ENCODE measurements at regions of chr11 and their contacts with region 1.

Region 1: DNA sequence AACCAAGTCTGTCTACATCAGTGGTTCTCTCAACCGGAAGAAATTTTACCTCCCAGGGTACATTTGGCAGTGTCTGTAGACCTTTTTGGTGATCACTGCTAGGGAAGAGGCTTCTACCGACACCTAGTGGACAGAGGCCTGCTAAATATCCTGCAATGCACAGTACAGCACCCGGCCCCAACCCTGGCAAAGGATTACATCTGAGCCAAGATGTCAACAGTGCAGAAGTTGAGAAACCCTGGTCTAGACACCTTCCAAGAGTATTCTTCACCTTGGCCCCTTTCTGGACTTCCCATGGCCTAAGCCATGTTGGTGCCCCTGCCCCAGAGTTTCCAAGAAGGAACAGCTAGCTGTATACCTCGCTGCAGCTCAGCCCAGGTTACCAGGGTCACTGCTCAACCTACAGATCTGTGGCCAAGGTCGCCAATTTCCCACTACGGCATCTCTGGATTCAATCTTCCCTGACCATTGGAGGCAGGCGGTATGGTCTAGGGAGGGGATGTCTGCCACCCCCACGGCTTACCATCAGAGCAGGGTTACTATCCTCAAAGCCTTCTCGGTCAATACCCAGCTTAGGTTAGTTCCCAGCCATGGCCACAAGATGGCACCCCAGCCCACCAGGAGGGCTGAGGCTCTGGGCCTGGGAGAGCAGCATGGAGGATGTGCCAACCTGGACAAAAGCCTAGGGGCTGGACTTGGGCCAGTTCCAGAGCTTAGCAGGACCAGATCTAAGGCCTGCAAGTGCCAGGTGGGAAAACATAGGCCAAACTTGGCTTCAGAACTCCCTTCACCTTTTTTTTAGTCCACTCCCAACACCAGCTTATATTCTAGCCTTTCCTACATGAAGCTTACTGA is 3.7 kb upstream of the KCNC1 start:
- DNase-seq: peak; percentile 91
- H3K27ac ChIP-seq: no peak overlapping the region
- CTCF ChIP-seq: peak; percentile 86

Region 2: GRCh38 chr11:17598700-17599459 is 132.0 kb before region 1 on chr11:
- CTCF ChIA-PET with region 1: interaction called, 12 read pairs
- POLR2A ChIA-PET with region 1: no interaction called
- DNase-seq: peak; percentile 65
- H3K27ac ChIP-seq: no peak overlapping the region
- CTCF ChIP-seq: peak; percentile 93

Region 3: GRCh38 chr11:17972987-17973386 is 242.2 kb after region 1 on chr11:
- CTCF ChIA-PET with region 1: interaction called, 59 read pairs
- POLR2A ChIA-PET with region 1: no interaction called
- DNase-seq: peak; percentile 86
- H3K27ac ChIP-seq: peak overlapping the region; percentile 29
- CTCF ChIP-seq: peak; percentile 82

Region 4: DNA sequence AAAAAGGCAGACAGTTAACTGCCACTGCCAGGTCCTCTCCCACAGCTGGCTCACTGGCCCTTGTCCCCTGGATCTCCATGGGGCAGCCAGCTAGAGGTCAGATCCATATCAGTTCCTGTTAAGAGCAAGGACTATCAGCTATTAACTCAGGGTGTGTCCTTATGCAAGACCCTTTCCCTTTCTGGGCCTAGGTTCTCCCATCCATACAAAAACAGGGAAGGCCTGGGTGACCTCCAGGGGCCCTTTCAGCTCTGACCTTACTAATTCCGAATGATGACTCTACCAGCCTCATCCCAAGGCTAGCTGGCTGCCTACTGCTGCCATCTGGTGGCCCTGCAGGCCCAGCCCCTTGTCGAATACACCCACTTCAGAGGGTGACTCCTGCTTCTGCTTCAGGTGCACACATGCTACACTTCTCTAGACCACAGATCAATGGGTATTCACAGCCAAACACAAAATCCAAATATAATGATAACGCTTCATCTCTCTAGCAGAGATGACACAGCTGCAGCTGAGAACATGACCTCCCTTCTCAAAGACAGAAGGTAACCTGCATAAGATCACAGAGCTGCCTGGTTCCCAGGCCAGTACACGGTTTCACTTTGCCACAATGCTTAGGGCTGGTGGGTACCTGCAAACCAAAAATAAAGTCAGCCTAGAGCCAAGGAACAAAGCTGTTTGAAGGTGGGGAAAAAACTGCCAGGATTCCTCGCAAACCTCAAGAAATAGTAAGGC is 247.9 kb after region 1 on chr11:
- CTCF ChIA-PET with region 1: interaction called, 59 read pairs
- POLR2A ChIA-PET with region 1: no interaction called
- DNase-seq: peak; percentile 68
- H3K27ac ChIP-seq: no peak overlapping the region
- CTCF ChIP-seq: peak; percentile 74

Region 5: GRCh38 chr11:18563090-18563730 is 832.4 kb after region 1 on chr11:
- CTCF ChIA-PET with region 1: no interaction called
- POLR2A ChIA-PET with region 1: no interaction called
- DNase-seq: no peak
- H3K27ac ChIP-seq: peak overlapping the region; percentile 19; the same call in 1 of the 2 replicates
- CTCF ChIP-seq: no peak